Mammary epithelial cell (primary cell): ENCODE measurements at regions of chr1 and their contacts with region 1.

Region 1: DNA sequence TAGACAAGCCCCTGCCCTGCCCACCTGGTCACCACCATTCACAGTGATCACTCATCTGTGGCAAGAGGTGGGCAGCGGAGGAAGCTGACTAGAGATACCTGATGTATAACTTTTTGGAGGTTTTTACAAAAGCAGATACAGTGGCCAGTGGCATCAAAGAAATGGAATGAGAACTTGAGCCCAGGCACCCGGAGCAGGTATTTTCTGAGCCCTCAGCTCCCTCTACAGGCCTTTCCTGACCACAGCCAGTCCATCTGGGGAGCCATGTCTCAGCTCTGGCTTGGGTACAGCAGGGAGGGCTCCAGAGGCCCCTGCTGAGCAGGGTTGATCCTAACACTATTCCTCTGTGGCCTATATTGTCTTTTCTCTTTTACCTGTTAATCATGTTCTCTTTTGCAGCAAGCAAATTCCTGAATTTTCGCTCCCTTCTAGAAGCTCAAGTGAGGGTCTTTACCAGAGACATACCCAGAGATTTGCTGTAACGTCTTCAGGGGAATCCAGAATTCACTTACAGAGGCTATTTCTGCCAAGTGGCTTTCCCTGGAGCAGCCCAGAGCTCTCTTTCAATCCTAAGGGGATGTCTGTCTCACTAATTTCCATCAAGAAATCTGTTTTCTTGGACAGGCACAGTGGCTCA is 27.3 kb downstream of the GPR157 start:
- DNase-seq: peak; percentile 42
- H3K4me3 ChIP-seq: no peak overlapping the region
- H3K27ac ChIP-seq: no peak overlapping the region
- H3K4me1 ChIP-seq: no peaks in the 10 kb centered on the region
- H3K27me3 ChIP-seq: no peaks in the 10 kb centered on the region
- CTCF ChIP-seq: peak; percentile 60 to 85

Region 2: DNA sequence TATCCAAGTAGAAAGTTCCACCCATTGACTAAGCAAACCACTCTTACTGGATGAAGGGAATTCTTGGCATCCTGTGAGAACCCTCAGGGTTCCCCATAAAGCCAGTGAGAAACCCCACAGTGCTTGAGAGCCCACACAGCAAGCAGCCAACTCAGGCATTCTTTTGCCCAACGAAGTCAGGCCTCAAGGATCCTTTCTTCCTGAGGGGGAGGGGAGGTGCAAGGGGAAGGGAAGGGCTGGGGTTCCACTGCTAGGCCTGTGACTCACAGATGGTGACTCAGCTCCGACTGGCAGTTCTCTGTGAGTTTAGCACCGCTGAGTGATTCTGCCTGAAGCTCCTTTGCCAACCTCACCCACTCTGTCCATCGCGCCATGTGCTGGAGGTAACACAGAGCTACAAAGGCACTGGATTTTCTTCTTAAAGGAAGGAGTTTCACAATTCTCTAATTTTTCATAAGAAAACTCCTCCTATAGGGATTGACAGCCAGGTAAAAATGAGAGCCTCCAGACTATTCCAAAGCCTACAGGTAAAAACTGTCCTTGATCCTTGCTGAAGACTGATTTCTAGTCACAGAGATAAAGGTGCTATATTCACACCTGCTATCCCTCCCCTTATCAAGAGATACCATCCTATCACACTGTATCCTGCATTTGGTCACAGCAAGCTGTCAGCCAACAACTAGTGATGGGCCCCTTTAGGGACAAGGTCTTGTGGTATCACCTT is 228.0 kb before region 1 on chr1:
- CTCF ChIA-PET with region 1: interaction called, 3 read pairs
- dilution Hi-C with region 1: no loop called
- in situ Hi-C with region 1: no loop called
- intact Hi-C with region 1: loop called (anchors 2 kb)
- DNase-seq: peak; percentile 99
- H3K4me3 ChIP-seq: peak overlapping the region in 2 of 3 experiments; percentile 4 to 35
- H3K27ac ChIP-seq: peak overlapping the region; percentile 93
- H3K4me1 ChIP-seq: peaks cover 61% of the 10 kb centered on the region
- H3K27me3 ChIP-seq: no peaks in the 10 kb centered on the region
- CTCF ChIP-seq: no peak

Region 3: GRCh38 chr1:8925406-8925805 is 176.2 kb before region 1 on chr1:
- CTCF ChIA-PET with region 1: no interaction called
- dilution Hi-C with region 1: no loop called
- in situ Hi-C with region 1: loop called in 1 of 2 experiments (anchors 10 kb)
- intact Hi-C with region 1: no loop called
- DNase-seq: no peak
- H3K4me3 ChIP-seq: no peak overlapping the region
- H3K27ac ChIP-seq: no peak overlapping the region
- H3K4me1 ChIP-seq: no peaks in the 10 kb centered on the region
- H3K27me3 ChIP-seq: no peaks in the 10 kb centered on the region
- CTCF ChIP-seq: no peak

Region 4: DNA sequence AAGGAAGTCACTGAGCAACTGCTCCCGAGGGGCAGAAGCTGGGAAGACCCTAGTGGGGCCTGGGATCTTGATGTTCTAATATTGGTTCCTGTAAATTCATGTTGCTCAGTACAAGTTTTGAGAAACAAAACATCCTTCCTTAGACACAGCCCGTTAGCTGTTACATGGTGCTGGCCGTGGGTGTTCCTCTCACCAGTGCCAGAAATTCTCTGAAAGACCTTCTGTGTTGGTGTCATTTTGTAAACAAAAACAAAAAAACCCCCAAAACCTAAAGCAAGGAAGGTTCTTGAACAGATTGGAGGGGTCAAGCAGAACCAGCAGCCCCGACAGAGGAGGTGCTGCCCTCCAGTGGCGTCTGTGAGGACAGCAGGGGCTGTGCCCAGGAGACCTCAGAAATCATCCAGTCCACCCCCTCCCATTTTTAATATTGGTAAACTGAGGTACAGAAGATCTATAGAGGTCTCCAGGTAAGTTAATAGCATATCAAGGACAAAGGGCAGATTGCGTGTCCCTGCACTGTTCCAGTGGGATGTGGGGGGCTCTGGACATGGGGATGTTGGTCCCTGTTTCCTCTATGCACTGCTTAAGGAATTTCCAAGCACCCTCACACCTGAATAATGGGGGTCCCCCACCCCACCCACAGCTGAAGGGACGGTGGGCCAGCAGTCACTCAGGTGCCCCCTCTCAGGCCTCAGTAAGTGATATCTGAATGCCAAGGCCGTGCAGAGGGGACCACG is 113.6 kb before region 1 on chr1:
- CTCF ChIA-PET with region 1: interaction called, 3 read pairs
- dilution Hi-C with region 1: no loop called
- in situ Hi-C with region 1: no loop called
- intact Hi-C with region 1: loop called (anchors 1 kb)
- DNase-seq: no peak
- H3K4me3 ChIP-seq: no peak overlapping the region
- H3K27ac ChIP-seq: no peak overlapping the region
- H3K4me1 ChIP-seq: peaks cover 9% of the 10 kb centered on the region
- H3K27me3 ChIP-seq: no peaks in the 10 kb centered on the region
- CTCF ChIP-seq: peak; percentile 86 to 93

Region 5: GRCh38 chr1:9128520-9129265 is 27.1 kb after region 1 on chr1 and contains the start of gene GPR157:
- CTCF ChIA-PET with region 1: no interaction called
- dilution Hi-C with region 1: loop called (anchors 5 kb)
- in situ Hi-C with region 1: no loop called
- intact Hi-C with region 1: no loop called
- DNase-seq: peak; percentile 72
- H3K4me3 ChIP-seq: peak within 1 kb of the TSS; percentile 51 to 78 (median 55)
- H3K27ac ChIP-seq: peak within 1 kb of the TSS; percentile 3
- H3K4me1 ChIP-seq: peaks cover 19% of the 10 kb centered on the region
- H3K27me3 ChIP-seq: no peaks in the 10 kb centered on the region
- CTCF ChIP-seq: peak in 1 of 2 donors; percentile 15
- total RNA-seq, gene GPR157: 7.2 to 10.4 TPM

Region 6: DNA sequence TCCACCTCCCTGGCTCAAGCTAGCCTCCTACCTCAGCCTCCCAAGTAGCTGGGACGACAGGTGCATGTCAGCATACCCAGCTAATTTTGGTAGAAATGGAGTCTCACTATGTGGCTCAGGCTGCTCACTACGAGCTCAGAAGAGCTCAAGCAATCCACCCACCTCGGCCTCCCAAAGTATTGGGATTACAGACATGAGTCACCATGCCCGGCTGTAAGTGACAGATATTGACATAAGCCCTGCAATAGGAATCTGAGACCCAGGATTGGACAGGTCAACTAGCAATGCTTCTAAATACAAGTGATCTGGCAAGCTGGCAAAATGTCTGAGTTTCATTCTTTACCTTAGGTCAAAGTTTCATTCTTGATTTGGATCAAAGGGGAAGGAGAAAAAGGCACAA is 92.4 kb after region 1 on chr1:
- CTCF ChIA-PET with region 1: no interaction called
- dilution Hi-C with region 1: no loop called
- in situ Hi-C with region 1: no loop called
- intact Hi-C with region 1: no loop called
- DNase-seq: no peak
- H3K4me3 ChIP-seq: no peak overlapping the region
- H3K27ac ChIP-seq: no peak overlapping the region
- H3K4me1 ChIP-seq: peaks cover 15% of the 10 kb centered on the region
- H3K27me3 ChIP-seq: no peaks in the 10 kb centered on the region
- CTCF ChIP-seq: no peak